ENCODE measurements at regions of chr5 and their contacts with region 1.

Region 1: GRCh38 chr5:87069974-87070624 is 197.6 kb upstream of the RASA1 start:
- DNase-seq: peak; percentile 59
- ATAC-seq: peak; percentile 86
- H3K4me3 ChIP-seq: no peak overlapping the region
- H3K27ac ChIP-seq: peak overlapping the region; percentile 17; the same call in 1 of the 2 replicates
- H3K4me1 ChIP-seq: peaks cover 17% of the 10 kb centered on the region
- H3K27me3 ChIP-seq: no peaks in the 10 kb centered on the region
- CTCF ChIP-seq: peak; percentile 47 to 62 (median 49); a peak in 4 of 6 replicates
- EP300 ChIP-seq: no peak
- POLR2A ChIP-seq: no peak
- RAD21 ChIP-seq: peak; percentile 90

Region 2: GRCh38 chr5:87081511-87082372 is 11.6 kb after region 1 on chr5:
- CTCF ChIA-PET with region 1: interaction called, 16 read pairs
- POLR2A ChIA-PET with region 1: interaction called, 5 read pairs
- RAD21 ChIA-PET with region 1: interaction called, 25 read pairs
- SMC1A ChIA-PET with region 1: interaction called, 17 read pairs
- in situ Hi-C with region 1: no loop called
- intact Hi-C with region 1: no loop called
- DNase-seq: peak; percentile 80
- ATAC-seq: peak; percentile 94
- H3K4me3 ChIP-seq: peak overlapping the region; percentile 13; the same call in 1 of the 2 replicates
- H3K27ac ChIP-seq: peak overlapping the region; percentile 90
- H3K4me1 ChIP-seq: peaks cover 15% of the 10 kb centered on the region
- H3K27me3 ChIP-seq: no peaks in the 10 kb centered on the region
- CTCF ChIP-seq: no peak
- EP300 ChIP-seq: peak; percentile 87 to 91
- POLR2A ChIP-seq: no peak
- RAD21 ChIP-seq: peak; percentile 36; the same call in 1 of the 2 replicates

Region 3: DNA sequence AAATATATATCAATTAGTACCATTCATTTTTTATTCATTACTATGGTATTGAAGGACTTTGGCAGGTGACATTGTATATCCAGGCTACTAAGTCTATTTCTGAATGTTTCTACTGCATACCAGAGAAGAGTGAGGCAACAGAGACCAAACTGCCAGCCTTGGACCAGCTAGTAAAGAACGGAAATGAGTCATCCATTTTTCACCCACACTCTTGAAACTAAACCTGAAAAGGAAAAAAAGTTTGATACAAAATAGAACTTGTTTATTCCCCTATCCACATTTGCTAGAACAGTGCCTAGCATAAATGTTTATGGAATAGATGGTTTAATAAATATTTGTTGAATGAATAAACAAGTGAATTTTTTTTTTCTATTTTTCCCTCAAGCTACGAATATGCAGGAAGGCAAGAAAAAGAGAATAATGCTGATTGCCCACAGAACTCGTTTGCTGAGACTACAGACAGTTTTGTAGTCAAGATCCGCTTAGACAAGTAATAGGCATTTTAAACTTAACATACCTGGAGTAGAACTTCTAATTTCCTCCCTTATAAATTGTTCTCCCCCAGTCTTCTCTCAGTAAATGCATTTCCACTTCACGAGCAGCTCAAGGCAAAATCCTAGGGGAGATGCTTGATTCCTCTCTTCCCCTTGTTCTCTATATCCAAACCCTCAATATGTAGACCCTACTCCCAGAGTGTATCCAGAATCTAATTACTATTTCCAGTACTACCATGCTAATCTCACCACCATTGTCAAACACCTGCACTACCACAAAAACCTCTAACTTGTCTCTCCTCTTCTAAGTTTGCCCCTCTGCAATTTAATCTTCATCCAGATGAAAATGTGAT is 51.4 kb after region 1 on chr5:
- CTCF ChIA-PET with region 1: interaction called, 18 read pairs
- POLR2A ChIA-PET with region 1: interaction called, 7 read pairs
- RAD21 ChIA-PET with region 1: interaction called, 19 read pairs
- SMC1A ChIA-PET with region 1: interaction called, 52 read pairs
- in situ Hi-C with region 1: no loop called
- intact Hi-C with region 1: loop called (anchors 2 kb)
- DNase-seq: peak; percentile 75
- ATAC-seq: peak; percentile 85
- H3K4me3 ChIP-seq: peak overlapping the region; percentile 33; the same call in 1 of the 2 replicates
- H3K27ac ChIP-seq: peak overlapping the region; percentile 78
- H3K4me1 ChIP-seq: peaks cover 41% of the 10 kb centered on the region
- H3K27me3 ChIP-seq: no peaks in the 10 kb centered on the region
- CTCF ChIP-seq: no peak
- EP300 ChIP-seq: peak in 1 of 2 experiments; percentile 81; a peak in 2 of 4 replicates
- POLR2A ChIP-seq: no peak
- RAD21 ChIP-seq: no peak

Region 4: DNA sequence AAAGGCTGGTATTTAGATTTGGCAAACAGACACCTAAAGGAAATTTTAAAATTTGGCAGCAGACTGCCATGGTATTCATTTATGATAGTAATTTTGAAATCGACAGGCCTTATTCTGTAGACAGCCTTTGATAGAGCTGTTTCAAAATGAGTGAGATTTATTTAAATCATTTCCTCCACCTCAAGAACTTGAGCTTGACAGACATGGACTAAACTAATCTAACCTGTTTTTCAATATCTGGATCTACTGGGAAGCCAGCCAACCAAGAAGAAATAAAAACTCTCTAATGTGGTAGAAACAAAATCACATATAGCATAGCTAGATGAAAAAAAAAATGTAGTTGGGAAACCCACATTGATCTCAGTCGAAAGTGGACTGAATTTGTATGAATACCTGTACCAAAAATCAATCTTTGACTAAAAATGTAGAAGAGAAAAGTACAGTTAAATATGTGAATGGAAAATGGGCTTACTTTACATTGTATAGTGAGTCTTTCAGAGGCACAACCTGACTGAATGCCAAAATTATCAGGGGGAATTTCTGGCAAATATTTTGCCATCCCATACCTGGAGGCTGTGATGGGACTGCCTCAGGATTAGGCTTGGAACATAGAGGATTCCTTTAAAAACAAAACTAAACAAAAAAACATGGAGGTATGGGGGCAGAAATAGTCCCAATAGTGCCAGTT is 140.8 kb after region 1 on chr5:
- CTCF ChIA-PET with region 1: interaction called, 8 read pairs
- POLR2A ChIA-PET with region 1: interaction called, 3 read pairs
- RAD21 ChIA-PET with region 1: interaction called, 6 read pairs
- SMC1A ChIA-PET with region 1: interaction called, 14 read pairs
- in situ Hi-C with region 1: no loop called
- intact Hi-C with region 1: no loop called
- DNase-seq: no peak
- ATAC-seq: peak; percentile 59
- H3K4me3 ChIP-seq: no peak overlapping the region
- H3K27ac ChIP-seq: no peak overlapping the region
- H3K4me1 ChIP-seq: peaks cover 5% of the 10 kb centered on the region; the same call in 1 of the 2 replicates
- H3K27me3 ChIP-seq: no peaks in the 10 kb centered on the region
- CTCF ChIP-seq: no peak
- EP300 ChIP-seq: no peak
- POLR2A ChIP-seq: no peak
- RAD21 ChIP-seq: no peak

Region 5: GRCh38 chr5:87347272-87347671 is 277.2 kb after region 1 on chr5:
- CTCF ChIA-PET with region 1: interaction called, 13 read pairs
- POLR2A ChIA-PET with region 1: interaction called, 5 read pairs
- RAD21 ChIA-PET with region 1: interaction called, 11 read pairs
- SMC1A ChIA-PET with region 1: interaction called, 6 read pairs
- in situ Hi-C with region 1: no loop called
- intact Hi-C with region 1: loop called (anchors 5 kb)
- DNase-seq: no peak
- ATAC-seq: peak; percentile 79
- H3K4me3 ChIP-seq: no peak overlapping the region
- H3K27ac ChIP-seq: peak overlapping the region; percentile 6; the same call in 1 of the 2 replicates
- H3K4me1 ChIP-seq: peaks cover 7% of the 10 kb centered on the region; the same call in 1 of the 2 replicates
- H3K27me3 ChIP-seq: no peaks in the 10 kb centered on the region
- CTCF ChIP-seq: no peak
- EP300 ChIP-seq: no peak
- POLR2A ChIP-seq: no peak
- RAD21 ChIP-seq: no peak

Region 6: DNA sequence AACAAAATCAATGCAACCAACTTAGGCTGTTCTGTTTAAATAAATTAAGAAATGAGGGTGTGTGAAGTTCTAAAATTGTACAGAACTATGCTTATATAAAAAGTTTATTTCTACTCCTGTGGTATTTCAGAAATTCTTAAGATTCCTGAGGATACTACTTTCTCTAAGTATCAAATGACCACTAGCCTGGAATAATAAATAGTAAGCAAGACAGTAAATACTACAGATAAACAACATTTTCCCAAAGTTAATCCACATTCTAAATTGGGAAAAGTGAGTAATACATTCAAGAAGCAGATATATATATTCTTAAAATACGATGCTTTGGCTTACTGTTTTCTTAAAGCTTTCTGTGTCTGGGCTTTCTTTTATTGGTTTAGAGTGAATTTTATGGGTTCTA is 313.1 kb after region 1 on chr5:
- CTCF ChIA-PET with region 1: interaction called, 10 read pairs
- POLR2A ChIA-PET with region 1: no interaction called
- RAD21 ChIA-PET with region 1: interaction called, 6 read pairs
- SMC1A ChIA-PET with region 1: interaction called, 15 read pairs
- in situ Hi-C with region 1: no loop called
- intact Hi-C with region 1: no loop called
- DNase-seq: no peak
- ATAC-seq: no peak
- H3K4me3 ChIP-seq: no peak overlapping the region
- H3K27ac ChIP-seq: no peak overlapping the region
- H3K4me1 ChIP-seq: no peaks in the 10 kb centered on the region
- H3K27me3 ChIP-seq: no peaks in the 10 kb centered on the region
- CTCF ChIP-seq: no peak
- EP300 ChIP-seq: no peak
- POLR2A ChIP-seq: no peak
- RAD21 ChIP-seq: no peak

Region 7: GRCh38 chr5:87405472-87406155 is 335.5 kb after region 1 on chr5:
- CTCF ChIA-PET with region 1: interaction called, 121 read pairs
- POLR2A ChIA-PET with region 1: interaction called, 3 read pairs
- RAD21 ChIA-PET with region 1: interaction called, 70 read pairs
- SMC1A ChIA-PET with region 1: interaction called, 94 read pairs
- in situ Hi-C with region 1: no loop called
- intact Hi-C with region 1: loop called (anchors 2 kb)
- DNase-seq: no peak
- ATAC-seq: peak; percentile 47
- H3K4me3 ChIP-seq: no peak overlapping the region
- H3K27ac ChIP-seq: no peak overlapping the region
- H3K4me1 ChIP-seq: peaks cover under 1% of the 10 kb centered on the region; the same call in 1 of the 2 replicates
- H3K27me3 ChIP-seq: no peaks in the 10 kb centered on the region
- CTCF ChIP-seq: no peak
- EP300 ChIP-seq: no peak
- POLR2A ChIP-seq: no peak
- RAD21 ChIP-seq: no peak

Measured in GM12878 (cell line).